ENCODE measurements at regions of chr10 and their contacts with region 1.

Region 1: DNA sequence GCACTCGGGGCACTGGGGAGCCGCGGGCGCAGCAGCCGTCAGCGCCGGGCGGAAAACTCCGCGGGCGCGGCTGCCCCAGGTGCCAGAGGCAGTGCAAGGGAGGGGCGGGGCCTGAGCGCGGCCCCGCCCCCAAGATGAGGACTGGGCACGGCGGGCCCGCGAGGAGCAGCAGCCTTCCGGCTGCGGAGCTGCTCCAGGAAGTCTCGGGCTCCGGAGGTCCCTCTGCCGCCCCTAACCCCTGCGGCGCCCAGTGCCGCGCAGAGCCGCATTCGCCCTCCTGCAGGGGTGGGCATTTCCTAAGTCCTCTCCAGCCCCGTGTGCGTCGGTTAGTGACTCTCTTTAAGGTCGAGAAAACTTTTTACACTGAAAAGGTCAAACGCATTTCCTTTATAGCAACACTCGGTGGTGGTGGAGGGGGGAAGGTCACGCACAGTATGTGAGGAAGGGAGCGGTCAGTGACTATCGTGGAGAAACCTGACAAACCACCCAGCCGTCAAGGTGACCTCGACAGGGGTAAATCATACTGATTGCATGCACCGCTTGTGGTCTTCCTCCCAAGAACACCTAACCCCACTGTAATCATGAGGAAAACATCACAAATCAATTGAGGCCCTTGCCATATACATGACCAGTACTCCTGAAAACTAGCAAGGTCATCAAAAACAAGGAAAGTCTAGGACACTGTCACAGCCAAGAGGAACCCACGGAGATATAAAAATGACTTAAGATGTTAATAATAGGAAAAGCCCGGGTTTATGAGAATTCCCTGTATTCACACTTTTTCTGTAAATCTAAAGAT is at the start of gene ANXA11:
- DNase-seq: peak; percentile 68 to 83
- ATAC-seq: peak; percentile 56 to 67
- H3K4me3 ChIP-seq: peak within 1 kb of the TSS; percentile 69 to 97 (median 78)
- H3K27ac ChIP-seq: peak within 1 kb of the TSS; percentile 95 to 100 (median 98)
- H3K4me1 ChIP-seq: peaks cover 40 to 52% of the 10 kb centered on the region in 2 donors
- H3K27me3 ChIP-seq: no peaks in the 10 kb centered on the region
- CTCF ChIP-seq: peak in 1 of 5 experiments; percentile 5
- POLR2A ChIP-seq: peak; percentile 92 to 97
- total RNA-seq, gene ANXA11: 142 to 202 (median 173) TPM

Region 2: GRCh38 chr10:79347226-79347893 is 858.3 kb before region 1 on chr10 and contains the start of gene PPIF:
- in situ Hi-C with region 1: no loop called
- intact Hi-C with region 1: loop called (anchors 5 kb)
- DNase-seq: peak; percentile 88 to 92
- ATAC-seq: peak; percentile 85 to 89
- H3K4me3 ChIP-seq: peak within 1 kb of the TSS; percentile 58 to 87 (median 72)
- H3K27ac ChIP-seq: peak within 1 kb of the TSS; percentile 90 to 97 (median 93)
- H3K4me1 ChIP-seq: peaks cover 13 to 18% of the 10 kb centered on the region in 2 donors
- H3K27me3 ChIP-seq: no peaks in the 10 kb centered on the region
- CTCF ChIP-seq: peak; percentile 96 to 99 (median 98)
- POLR2A ChIP-seq: peak; percentile 94
- total RNA-seq, gene PPIF: 39.1 to 82.1 (median 67.9) TPM

Region 3: DNA sequence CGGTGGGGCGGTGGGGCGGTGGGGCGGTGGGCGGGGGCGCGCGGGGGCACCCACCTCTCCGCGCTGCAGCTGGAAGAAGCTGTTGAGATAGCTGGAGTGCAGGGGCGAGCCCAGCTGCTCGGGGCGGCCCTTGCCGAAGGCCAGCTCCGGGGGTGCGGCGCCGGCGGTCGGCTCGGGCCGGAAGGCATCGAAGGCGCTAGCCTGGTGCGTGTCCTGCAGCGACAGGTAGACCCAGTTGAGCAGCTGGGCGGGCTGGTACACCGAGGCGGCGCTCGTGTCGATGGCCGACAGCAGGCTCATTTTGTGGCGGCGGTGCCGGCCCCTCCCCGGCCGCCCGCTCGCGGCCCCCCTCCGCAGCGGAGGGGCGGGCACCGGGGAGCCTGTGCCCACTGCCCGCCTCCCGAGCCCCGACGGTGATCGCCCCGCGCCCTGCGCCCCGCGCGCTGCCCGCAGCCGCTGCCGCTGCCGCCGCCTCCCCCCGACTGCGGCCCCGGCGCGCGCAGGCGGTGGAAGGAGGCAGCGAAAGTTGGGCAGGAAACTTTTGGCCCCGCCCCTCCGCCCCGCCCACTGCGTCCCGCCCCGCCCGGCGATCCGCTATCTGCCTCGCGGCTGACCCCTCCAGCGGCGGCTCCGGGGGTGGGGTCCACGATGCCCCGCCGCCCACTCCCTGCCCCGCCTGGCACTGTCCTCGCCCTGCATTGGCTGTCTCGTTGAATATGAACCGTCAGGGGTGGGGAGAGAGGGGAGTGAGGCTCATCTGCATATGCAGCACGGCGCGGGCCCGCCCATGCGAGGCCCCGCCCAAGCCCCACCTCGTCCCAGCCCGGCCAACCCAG is 760.3 kb before region 1 on chr10 and contains the start of gene ZCCHC24:
- in situ Hi-C with region 1: no loop called
- intact Hi-C with region 1: loop called (anchors 5 kb)
- DNase-seq: peak; percentile 99
- ATAC-seq: peak; percentile 57 to 64
- H3K4me3 ChIP-seq: peak within 1 kb of the TSS; percentile 69 to 88 (median 71)
- H3K27ac ChIP-seq: peak within 1 kb of the TSS; percentile 91 to 98 (median 94)
- H3K4me1 ChIP-seq: peaks cover 69 to 78% of the 10 kb centered on the region in 2 donors
- H3K27me3 ChIP-seq: no peaks in the 10 kb centered on the region
- CTCF ChIP-seq: peak in 1 of 5 experiments; percentile 12
- POLR2A ChIP-seq: peak; percentile 97 to 98
- total RNA-seq, gene ZCCHC24: 59.6 to 122 (median 84.5) TPM

Region 4: DNA sequence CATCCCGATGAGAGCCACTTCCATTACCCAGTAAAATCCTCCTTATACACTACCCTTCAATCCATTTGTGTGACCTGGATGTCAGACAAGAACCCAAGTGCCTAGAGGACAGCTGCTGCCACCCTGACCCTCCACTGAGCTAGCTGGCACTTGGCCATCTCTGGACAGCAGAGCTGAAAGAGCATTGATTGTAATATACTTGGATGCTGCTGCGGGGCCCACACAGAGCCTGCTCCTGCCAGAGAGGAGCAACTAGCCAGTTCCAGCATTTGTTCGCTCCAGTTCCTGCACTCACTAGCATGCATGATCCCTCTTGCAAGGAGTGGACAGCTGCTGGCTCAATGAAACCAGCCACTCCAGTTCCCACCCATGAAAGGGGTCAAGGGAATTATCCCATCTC is 135.6 kb before region 1 on chr10:
- in situ Hi-C with region 1: loop called in 1 of 4 experiments (anchors 25 kb)
- intact Hi-C with region 1: loop called (anchors 5 kb)
- DNase-seq: no peak
- ATAC-seq: no peak
- H3K4me3 ChIP-seq: no peak overlapping the region
- H3K27ac ChIP-seq: no peak overlapping the region
- H3K4me1 ChIP-seq: peaks cover 0 to 3% of the 10 kb centered on the region in 2 donors
- H3K27me3 ChIP-seq: no peaks in the 10 kb centered on the region
- CTCF ChIP-seq: no peak
- POLR2A ChIP-seq: no peak

Region 5: DNA sequence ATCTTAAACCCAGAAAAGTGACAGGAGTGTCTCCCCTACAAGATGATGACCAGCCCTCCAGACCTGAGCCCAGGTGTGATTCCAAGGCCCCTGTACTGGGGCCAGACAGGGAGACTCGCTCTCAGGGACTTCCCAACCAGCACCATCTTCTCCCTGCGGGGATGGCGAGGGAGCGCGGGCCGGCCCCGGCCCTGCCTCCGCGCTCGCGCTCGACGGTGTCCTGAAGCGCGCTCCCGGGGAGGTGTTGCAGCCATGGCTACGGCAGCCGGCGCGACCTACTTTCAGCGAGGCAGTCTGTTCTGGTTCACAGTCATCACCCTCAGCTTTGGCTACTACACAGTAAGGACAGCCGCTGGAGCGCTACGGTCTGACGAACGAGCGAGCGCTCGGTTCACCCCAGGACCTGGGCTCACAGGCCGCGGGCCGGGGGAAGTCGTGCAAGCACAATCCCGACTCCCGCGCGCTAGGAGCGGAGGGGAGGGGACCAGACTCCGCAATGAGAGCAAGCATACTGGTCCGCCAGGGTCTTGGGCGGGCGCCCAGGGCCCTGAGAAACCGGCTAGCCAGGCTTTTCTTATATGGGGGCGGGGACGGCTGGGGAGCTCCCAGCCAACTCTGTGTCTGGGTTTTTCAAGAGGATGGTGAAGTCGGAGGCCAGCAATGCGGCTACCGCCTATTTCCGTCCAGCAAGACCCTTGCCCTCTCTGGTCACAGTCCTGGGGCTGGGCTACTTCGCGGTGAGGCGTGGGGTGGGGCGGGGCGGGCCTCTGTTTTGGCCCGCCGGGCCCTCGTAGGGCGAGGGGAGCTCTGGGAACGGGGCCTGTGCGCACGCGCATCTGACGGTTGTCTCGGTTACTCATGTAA is 127.0 kb before region 1 on chr10 and contains the start of gene TMEM254:
- in situ Hi-C with region 1: loop called in 1 of 4 experiments (anchors 25 kb)
- intact Hi-C with region 1: loop called (anchors 5 kb)
- DNase-seq: peak; percentile 74 to 84
- ATAC-seq: peak; percentile 91 to 95
- H3K4me3 ChIP-seq: peak within 1 kb of the TSS; percentile 59 to 99 (median 92)
- H3K27ac ChIP-seq: peak within 1 kb of the TSS; percentile 88 to 99 (median 95)
- H3K4me1 ChIP-seq: peaks cover 15 to 18% of the 10 kb centered on the region in 2 donors
- H3K27me3 ChIP-seq: no peaks in the 10 kb centered on the region
- CTCF ChIP-seq: no peak
- POLR2A ChIP-seq: peak; percentile 27 to 47
- total RNA-seq, gene TMEM254: 0.73 to 7.4 (median 4.8) TPM

Region 6: DNA sequence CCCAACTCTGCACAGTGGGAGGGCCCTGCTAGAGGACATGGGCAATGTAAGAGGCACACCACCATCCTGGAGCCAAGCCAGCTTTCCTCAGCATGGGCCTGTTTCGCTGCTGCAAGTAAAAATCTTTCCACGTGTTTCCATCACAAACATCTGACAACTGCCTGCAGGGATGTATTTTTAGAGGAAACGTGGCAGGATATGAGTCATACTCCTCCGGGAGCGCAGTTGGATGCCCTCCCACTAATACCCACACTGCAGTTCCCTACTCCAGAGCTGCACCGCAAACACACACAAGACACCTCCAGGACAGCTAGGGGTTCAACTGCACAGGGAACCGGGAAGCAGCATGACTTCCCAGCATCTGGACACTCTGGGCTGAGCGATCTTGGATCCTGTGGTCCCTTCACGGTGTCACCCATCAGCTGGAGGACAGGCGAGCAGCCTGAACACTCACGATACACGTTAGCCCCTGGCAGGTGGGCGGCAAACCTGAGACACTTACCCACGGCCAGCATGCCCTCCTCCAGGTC is 47.0 kb before region 1 on chr10:
- in situ Hi-C with region 1: loop called (anchors 5 to 10 kb)
- intact Hi-C with region 1: loop called (anchors 1 kb)
- DNase-seq: peak; percentile 87 to 89
- ATAC-seq: peak; percentile 97 to 98
- H3K4me3 ChIP-seq: no peak overlapping the region
- H3K27ac ChIP-seq: peak overlapping the region; percentile 85 to 94 (median 91)
- H3K4me1 ChIP-seq: peaks cover 33 to 50% of the 10 kb centered on the region in 2 donors
- H3K27me3 ChIP-seq: no peaks in the 10 kb centered on the region
- CTCF ChIP-seq: no peak
- POLR2A ChIP-seq: peak; percentile 24 to 51

Region 7: GRCh38 chr10:80166581-80167470 is 38.9 kb before region 1 on chr10:
- in situ Hi-C with region 1: loop called in 1 of 4 experiments (anchors 5 kb)
- intact Hi-C with region 1: loop called (anchors 1 kb)
- DNase-seq: no peak
- ATAC-seq: no peak
- H3K4me3 ChIP-seq: no peak overlapping the region
- H3K27ac ChIP-seq: peak overlapping the region; percentile 71 to 92 (median 80)
- H3K4me1 ChIP-seq: peaks cover 60 to 71% of the 10 kb centered on the region in 2 donors
- H3K27me3 ChIP-seq: no peaks in the 10 kb centered on the region
- CTCF ChIP-seq: no peak
- POLR2A ChIP-seq: no peak

Measured in gastrocnemius medialis (tissue), 4 donors.